Breast epithelium (tissue), 4 donors: ENCODE measurements at regions of chr2 and their contacts with region 1.

Region 1: GRCh38 chr2:46394649-46395510 is 84.5 kb upstream of the TMEM247 start:
- DNase-seq: no peak
- H3K4me3 ChIP-seq: no peak overlapping the region
- H3K27ac ChIP-seq: no peak overlapping the region
- H3K4me1 ChIP-seq: no peaks in the 10 kb centered on the region
- H3K27me3 ChIP-seq: no peaks in the 10 kb centered on the region
- CTCF ChIP-seq: no peak
- POLR2A ChIP-seq: no peak

Region 2: GRCh38 chr2:46365913-46366667 is 28.8 kb before region 1 on chr2:
- intact Hi-C with region 1: loop called (anchors 2 kb)
- DNase-seq: no peak
- H3K4me3 ChIP-seq: no peak overlapping the region
- H3K27ac ChIP-seq: no peak overlapping the region
- H3K4me1 ChIP-seq: no peaks in the 10 kb centered on the region
- H3K27me3 ChIP-seq: no peaks in the 10 kb centered on the region
- CTCF ChIP-seq: peak in 1 of 3 donors; percentile 21
- POLR2A ChIP-seq: no peak

Region 3: DNA sequence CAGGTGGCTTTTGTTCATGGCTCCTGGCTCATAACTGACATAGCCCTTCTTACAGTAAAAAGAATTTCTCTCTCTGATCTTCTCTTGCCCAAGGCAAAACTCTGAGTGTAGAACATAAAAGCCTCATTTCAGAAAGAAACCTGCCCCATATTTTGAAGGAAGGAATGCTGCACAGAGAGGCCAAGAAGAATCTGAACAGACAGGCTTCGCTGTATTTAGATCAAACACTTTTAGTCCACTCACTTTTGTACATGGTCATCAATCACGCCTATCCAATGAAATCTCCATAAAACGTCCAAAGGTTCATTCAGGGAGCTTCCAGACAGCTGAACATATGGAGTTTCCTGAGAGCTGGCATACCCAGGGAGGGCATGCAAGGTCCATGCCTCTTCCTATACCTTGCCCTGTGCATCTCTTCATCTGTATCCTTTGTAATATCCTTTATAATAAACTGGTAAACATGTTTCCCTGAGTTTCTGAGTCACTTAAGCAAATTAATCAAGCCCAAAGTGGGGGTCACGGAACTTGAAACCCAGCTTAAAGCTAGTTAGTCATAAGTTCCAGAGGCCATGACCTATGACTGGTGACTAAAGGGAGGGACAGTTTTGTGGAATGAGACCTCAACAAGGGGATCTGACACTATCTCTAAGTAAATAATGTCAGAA is 22.0 kb after region 1 on chr2:
- intact Hi-C with region 1: no loop called
- DNase-seq: no peak
- H3K4me3 ChIP-seq: no peak overlapping the region
- H3K27ac ChIP-seq: no peak overlapping the region
- H3K4me1 ChIP-seq: no peaks in the 10 kb centered on the region
- H3K27me3 ChIP-seq: no peaks in the 10 kb centered on the region
- CTCF ChIP-seq: no peak
- POLR2A ChIP-seq: no peak